Colonic mucosa (tissue), 4 donors: ENCODE measurements at regions of chr14 and their contacts with region 1.

Region 1: DNA sequence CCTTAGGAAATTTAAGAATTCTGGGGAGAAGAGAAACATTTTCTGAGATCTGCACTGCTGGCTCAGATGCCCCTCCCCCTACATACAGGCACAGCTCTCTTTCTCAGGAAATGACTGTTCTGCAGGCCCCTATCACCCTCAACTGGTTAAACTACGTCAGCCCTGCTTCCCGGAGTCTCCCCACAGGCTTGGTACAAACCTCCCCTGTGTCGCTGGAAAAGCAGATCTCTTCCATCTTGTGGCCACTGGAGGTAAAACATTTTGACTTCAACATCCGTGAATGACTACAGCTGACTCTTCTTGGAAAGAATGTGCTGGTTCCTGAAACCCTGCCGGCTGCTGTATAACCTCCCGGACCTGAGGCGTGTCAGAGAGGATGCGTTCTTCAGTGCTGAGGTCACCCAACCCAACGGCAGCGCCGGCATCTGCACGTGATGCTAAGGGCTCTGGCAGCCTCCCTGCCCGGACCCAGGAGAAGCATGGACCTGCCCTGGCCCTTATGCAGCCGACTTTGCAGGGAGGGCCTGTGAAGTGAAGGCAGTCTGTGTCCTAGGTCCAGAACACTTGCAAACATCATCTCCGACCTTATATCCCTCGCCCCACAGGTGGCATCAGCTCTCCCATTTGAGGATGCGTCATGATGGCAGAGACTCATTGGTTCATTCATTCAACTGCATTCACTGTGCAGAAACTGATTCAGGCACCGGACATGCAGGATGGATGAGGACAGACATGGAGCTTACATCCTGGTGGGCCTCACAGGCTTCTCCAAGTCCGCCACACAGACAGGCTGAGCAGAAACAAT is 129.3 kb downstream of the GCH1 start:
- DNase-seq: peak; percentile 76
- H3K4me3 ChIP-seq: no peak overlapping the region
- H3K27ac ChIP-seq: peak overlapping the region; percentile 58
- H3K4me1 ChIP-seq: peaks cover 4% of the 10 kb centered on the region
- H3K27me3 ChIP-seq: no peaks in the 10 kb centered on the region
- CTCF ChIP-seq: peak; percentile 49

Region 2: GRCh38 chr14:54387328-54387727 is 386.0 kb before region 1 on chr14:
- intact Hi-C with region 1: no loop called
- DNase-seq: no peak
- H3K4me3 ChIP-seq: no peak overlapping the region
- H3K27ac ChIP-seq: no peak overlapping the region
- H3K4me1 ChIP-seq: no peaks in the 10 kb centered on the region
- H3K27me3 ChIP-seq: no peaks in the 10 kb centered on the region
- CTCF ChIP-seq: no peak

Region 3: DNA sequence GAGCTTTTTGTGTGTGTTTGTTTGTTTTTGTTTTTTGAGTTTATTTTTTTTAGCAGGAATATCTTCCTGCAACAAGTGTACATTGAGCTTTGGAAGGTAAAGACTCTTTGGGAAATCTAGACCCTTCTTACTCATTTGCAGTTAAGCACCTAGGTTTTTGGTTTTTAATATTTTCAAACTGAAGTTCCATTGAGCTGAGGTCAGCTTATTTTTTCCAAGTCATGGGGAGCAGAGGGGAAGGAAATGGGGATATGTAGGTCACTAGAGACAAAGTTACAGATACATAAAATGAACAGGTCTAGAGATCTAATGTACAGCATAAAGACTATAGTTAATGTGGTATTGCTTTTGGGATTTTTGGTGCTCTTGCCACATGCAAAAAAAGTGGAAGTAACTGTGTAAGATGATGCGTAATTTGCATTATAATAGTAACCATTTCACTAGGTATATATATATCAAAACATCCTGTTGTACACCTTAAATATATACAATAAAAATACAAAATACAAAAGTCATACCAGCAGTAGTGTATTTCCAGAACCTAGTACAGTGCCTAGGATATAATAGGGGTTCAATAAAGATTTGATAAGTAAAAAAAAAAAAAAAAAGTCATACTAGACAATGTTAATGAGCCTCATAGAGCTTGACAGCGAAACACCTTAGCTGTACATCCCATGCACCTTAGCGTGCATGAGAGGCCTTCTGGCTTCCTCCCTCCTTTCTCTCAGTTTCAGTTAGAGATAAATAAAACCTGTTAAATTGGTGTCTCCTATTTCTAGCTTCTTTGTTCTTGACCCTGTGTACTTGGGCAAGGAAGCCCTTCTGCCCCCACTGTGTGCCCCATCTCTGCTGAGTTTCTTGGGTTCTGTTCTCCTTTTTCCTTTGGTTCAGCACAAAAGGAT is 241.0 kb before region 1 on chr14:
- intact Hi-C with region 1: no loop called
- DNase-seq: no peak
- H3K4me3 ChIP-seq: no peak overlapping the region
- H3K27ac ChIP-seq: no peak overlapping the region
- H3K4me1 ChIP-seq: peaks cover 4% of the 10 kb centered on the region
- H3K27me3 ChIP-seq: no peaks in the 10 kb centered on the region
- CTCF ChIP-seq: no peak

Region 4: GRCh38 chr14:54691525-54692283 is 81.7 kb before region 1 on chr14:
- intact Hi-C with region 1: loop called (anchors 5 kb)
- DNase-seq: peak; percentile 77
- H3K4me3 ChIP-seq: no peak overlapping the region
- H3K27ac ChIP-seq: no peak overlapping the region
- H3K4me1 ChIP-seq: no peaks in the 10 kb centered on the region
- H3K27me3 ChIP-seq: no peaks in the 10 kb centered on the region
- CTCF ChIP-seq: peak; percentile 75